ENCODE measurements at regions of chr17 and their contacts with region 1.

Region 1: DNA sequence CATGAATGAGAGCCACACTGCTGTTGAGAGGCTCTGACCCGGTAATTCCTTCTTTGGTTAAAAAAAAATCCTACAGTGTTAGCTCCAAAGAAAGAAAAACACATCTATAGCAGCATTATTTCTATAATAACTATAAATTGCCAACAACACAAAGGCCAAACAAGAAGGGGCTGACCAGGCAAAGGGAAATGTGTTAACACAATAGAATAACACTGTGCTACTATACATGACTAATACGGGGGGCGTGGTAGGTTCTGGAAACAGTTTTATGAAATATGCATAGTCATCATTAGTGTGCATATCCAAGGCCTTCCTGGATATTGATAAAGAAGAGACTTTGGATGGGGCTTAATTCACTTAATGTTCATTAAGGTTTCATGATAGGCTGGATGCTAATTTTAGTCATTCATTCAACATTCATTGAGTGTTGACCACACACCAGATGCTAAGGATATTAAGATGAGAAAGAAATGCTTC is 50.0 kb upstream of the CCL1 start:
- DNase-seq: no peak
- ATAC-seq: no peak
- H3K4me3 ChIP-seq: no peak overlapping the region
- H3K27ac ChIP-seq: no peak overlapping the region
- H3K4me1 ChIP-seq: no peaks in the 10 kb centered on the region
- H3K27me3 ChIP-seq: no peaks in the 10 kb centered on the region
- CTCF ChIP-seq: no peak
- POLR2A ChIP-seq: no peak

Region 2: DNA sequence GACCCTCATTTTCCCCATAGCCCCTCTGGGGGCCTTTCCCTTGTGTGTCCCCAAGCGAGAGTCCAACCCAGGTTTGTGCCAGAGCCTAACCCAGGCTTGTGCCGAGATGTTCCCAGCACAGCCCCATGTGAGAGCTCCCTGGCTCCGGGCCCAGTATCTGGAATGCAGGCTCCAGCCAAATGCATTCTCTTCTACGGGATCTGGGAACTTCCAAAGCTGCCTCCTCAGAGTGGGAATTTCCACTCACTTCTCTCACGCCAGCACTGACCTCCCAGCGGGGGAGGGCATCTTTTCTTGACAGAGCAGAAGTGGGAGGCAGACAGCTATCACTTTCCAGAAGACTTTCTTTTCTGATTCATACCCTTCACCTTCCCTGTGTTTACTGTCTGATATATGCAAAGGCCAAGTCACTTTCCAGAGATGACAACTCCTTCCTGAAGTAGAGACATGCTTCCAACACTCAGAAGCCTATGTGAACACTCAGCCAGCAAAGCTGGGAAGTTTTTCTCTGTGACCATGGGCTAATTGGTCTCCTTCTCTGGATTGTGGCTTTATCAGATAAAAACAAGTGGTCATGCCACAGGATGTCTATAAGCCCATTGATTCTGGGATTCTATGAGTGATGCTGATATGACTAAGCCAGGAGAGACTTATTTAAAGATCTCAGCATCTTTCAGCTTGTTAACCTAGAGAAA is 160.4 kb before region 1 on chr17:
- intact Hi-C with region 1: no loop called
- DNase-seq: peak; percentile 86 to 90 (median 88)
- ATAC-seq: peak; percentile 83 to 88 (median 84)
- H3K4me3 ChIP-seq: no peak overlapping the region
- H3K27ac ChIP-seq: peak overlapping the region; percentile 1 to 43 (median 26)
- H3K4me1 ChIP-seq: peaks cover 0 to 24% (median 4%) of the 10 kb centered on the region in 4 donors
- H3K27me3 ChIP-seq: no peaks in the 10 kb centered on the region
- CTCF ChIP-seq: no peak
- POLR2A ChIP-seq: no peak

Region 3: GRCh38 chr17:34357398-34357797 is 55.6 kb before region 1 on chr17:
- intact Hi-C with region 1: no loop called
- DNase-seq: no peak
- ATAC-seq: no peak
- H3K4me3 ChIP-seq: no peak overlapping the region
- H3K27ac ChIP-seq: no peak overlapping the region
- H3K4me1 ChIP-seq: no peaks in the 10 kb centered on the region
- H3K27me3 ChIP-seq: no peaks in the 10 kb centered on the region
- CTCF ChIP-seq: no peak
- POLR2A ChIP-seq: no peak

Region 4: GRCh38 chr17:34527908-34528470 is 115.0 kb after region 1 on chr17:
- intact Hi-C with region 1: loop called in 1 of 2 experiments (anchors 10 kb)
- DNase-seq: no peak
- ATAC-seq: no peak
- H3K4me3 ChIP-seq: no peak overlapping the region
- H3K27ac ChIP-seq: no peak overlapping the region
- H3K4me1 ChIP-seq: no peaks in the 10 kb centered on the region
- H3K27me3 ChIP-seq: no peaks in the 10 kb centered on the region
- CTCF ChIP-seq: no peak
- POLR2A ChIP-seq: no peak

Region 5: GRCh38 chr17:35129973-35130351 is 717.0 kb after region 1 on chr17:
- intact Hi-C with region 1: loop called in 1 of 2 experiments (anchors 10 kb)
- DNase-seq: no peak
- ATAC-seq: no peak
- H3K4me3 ChIP-seq: no peak overlapping the region
- H3K27ac ChIP-seq: no peak overlapping the region
- H3K4me1 ChIP-seq: no peaks in the 10 kb centered on the region
- H3K27me3 ChIP-seq: no peaks in the 10 kb centered on the region
- CTCF ChIP-seq: no peak
- POLR2A ChIP-seq: no peak

Measured in right lobe of liver (tissue), 6 donors.